MCF 10A (cell line): ENCODE measurements at regions of chr4 and their contacts with region 1.

Region 1: DNA sequence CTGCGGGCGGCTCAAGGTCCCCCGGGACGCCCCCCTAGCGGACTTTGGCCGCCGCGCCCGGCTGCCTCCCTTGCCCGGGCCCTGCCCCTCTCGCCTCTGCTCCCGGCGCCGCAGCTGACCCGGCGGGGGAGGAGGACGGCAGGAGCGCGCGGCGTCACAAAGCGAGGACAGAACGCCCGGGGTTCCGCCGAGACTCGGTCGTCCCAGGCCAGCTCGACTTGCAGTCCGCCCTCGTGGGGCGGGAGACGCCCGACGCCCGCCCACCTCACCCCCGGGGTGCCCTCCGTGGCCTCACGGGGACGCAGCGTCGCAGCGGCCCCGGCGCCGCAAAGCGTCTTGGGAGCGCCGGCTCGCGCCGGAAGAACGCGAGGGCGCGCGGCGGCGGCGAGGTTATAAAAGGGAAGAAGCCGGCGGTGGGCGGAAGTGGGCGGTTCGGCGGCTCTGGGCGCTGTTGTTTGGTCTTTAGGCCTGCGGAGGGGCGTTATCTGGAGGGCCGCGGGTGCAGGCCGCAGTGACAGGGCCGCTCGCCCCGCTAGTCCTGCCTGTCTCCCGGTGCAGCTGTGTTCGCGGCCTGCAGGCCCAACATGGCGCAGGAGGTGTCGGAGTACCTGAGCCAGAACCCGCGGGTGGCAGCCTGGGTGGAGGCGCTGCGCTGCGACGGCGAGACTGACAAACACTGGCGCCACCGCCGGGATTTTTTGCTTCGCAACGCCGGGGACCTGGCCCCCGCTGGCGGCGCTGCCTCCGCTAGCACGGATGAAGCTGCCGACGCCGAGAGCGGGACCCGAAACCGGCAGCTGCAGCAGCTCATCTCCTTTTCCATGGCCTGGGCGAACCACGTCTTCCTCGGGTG is at the start of gene CDKN2AIP:
- DNase-seq: peak; percentile 94
- H3K4me3 Mint-ChIP-seq: peak within 1 kb of the TSS; percentile 94
- H3K27ac Mint-ChIP-seq: peak within 1 kb of the TSS; percentile 84
- H3K4me1 Mint-ChIP-seq: peaks cover 16% of the 10 kb centered on the region
- H3K27me3 Mint-ChIP-seq: no peaks in the 10 kb centered on the region
- CTCF ChIP-seq: no peak
- total RNA-seq, gene CDKN2AIP: 12.0 and 13.4 TPM in 2 replicates

Region 2: DNA sequence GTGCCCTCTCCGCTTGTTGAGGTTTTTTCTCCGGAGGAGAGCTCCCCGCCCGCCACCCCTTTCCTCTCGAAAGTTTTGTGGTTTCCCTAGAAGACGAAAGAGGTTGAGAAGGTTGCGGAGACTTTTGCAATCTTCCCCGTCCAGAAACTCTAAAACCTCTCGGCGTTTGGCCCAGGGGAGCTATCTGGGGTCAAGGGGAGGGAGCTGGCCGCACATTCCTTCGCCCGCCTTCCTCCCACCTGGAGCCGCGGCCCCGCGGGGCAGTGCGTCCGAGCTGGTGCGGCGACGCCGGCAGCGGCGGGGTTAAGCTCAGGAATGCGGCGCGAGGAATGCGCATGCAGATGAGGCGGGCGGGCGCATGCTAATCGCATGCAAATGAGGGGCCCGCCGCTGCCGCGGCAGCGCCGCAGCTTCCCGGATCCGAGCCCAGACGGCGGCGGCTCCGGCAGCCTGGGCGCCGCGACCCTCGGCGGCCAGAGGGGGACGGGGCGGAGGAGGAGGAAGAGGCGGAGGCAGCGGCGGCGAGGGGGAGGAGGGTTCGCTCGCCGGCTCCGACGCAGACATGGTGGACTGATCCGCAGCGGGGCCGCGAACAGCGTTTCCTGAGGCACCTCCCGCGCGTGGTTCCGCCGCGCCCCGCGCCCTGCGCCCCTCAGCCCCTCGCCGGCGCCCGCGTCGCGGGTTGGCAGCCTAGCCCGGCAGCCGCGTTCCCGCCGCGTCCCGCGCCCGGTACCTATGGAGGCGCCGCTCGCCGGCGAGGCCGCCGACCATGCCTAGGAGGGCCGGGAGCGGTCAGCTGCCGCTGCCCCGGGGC is 345.5 kb before region 1 on chr4 and contains the start of gene WWC2:
- CTCF ChIA-PET with region 1: interaction called, 3 read pairs
- POLR2A ChIA-PET with region 1: interaction called, 14 read pairs
- intact Hi-C with region 1: no loop called
- DNase-seq: peak; percentile 92
- H3K4me3 Mint-ChIP-seq: peak within 1 kb of the TSS; percentile 78
- H3K27ac Mint-ChIP-seq: peak within 1 kb of the TSS; percentile 76
- H3K4me1 Mint-ChIP-seq: peaks cover 17% of the 10 kb centered on the region
- H3K27me3 Mint-ChIP-seq: no peaks in the 10 kb centered on the region
- CTCF ChIP-seq: no peak
- total RNA-seq, gene WWC2: 38.6 and 42.4 TPM in 2 replicates

Region 3: GRCh38 chr4:183422967-183423631 is 21.3 kb before region 1 on chr4:
- CTCF ChIA-PET with region 1: interaction called, 3 read pairs
- POLR2A ChIA-PET with region 1: interaction called, 19 read pairs
- intact Hi-C with region 1: no loop called
- DNase-seq: peak; percentile 66
- H3K4me3 Mint-ChIP-seq: no peak overlapping the region
- H3K27ac Mint-ChIP-seq: peak overlapping the region; percentile 74
- H3K4me1 Mint-ChIP-seq: peaks cover 17% of the 10 kb centered on the region
- H3K27me3 Mint-ChIP-seq: no peaks in the 10 kb centered on the region
- CTCF ChIP-seq: no peak

Region 4: DNA sequence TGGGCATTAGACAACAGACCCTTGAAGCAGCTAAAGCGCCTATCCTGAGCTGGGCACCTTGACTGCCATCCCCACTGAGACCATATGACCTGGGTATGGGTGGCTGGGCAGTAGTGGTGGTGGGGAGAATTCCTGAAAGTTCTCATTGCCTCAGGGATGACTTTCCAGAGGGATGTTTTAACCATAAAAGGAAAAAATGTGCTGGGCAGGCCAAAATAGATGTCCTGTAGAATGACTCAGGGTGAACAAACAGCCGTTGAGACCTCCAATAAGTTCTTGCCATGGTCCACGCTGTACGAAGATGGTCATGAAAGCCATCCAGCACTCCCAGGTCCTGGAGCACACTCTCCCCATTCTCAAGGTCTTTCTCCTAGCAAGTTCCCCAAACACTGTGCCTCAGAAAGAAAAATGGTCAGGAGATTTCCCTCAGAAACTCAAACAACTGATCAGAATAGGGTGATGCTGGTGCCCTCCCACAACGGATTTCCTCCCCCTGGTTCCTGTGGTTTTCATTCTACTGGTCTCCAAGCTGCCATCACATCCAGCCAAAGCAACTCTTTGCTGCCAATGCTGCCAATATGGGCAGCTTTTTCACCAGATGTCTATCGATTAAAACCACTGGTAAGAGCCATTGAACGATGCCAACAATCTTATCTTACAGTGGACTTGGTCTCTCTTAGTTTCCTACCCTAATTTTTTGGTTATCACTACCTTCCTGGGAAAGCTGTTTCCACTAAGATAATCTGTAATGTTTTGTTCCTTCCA is 11.2 kb after region 1 on chr4:
- CTCF ChIA-PET with region 1: interaction called, 4 read pairs
- POLR2A ChIA-PET with region 1: interaction called, 23 read pairs
- intact Hi-C with region 1: no loop called
- DNase-seq: no peak
- H3K4me3 Mint-ChIP-seq: no peak overlapping the region
- H3K27ac Mint-ChIP-seq: no peak overlapping the region
- H3K4me1 Mint-ChIP-seq: no peaks in the 10 kb centered on the region
- H3K27me3 Mint-ChIP-seq: no peaks in the 10 kb centered on the region
- CTCF ChIP-seq: no peak

Region 5: GRCh38 chr4:183636923-183637322 is 192.5 kb after region 1 on chr4:
- CTCF ChIA-PET with region 1: no interaction called
- POLR2A ChIA-PET with region 1: interaction called, 11 read pairs
- intact Hi-C with region 1: no loop called
- DNase-seq: peak; percentile 67
- H3K4me3 Mint-ChIP-seq: peak overlapping the region; percentile 48
- H3K27ac Mint-ChIP-seq: peak overlapping the region; percentile 3
- H3K4me1 Mint-ChIP-seq: peaks cover 14% of the 10 kb centered on the region
- H3K27me3 Mint-ChIP-seq: no peaks in the 10 kb centered on the region
- CTCF ChIP-seq: no peak